ENCODE measurements at regions of chrX and their contacts with region 1.

Region 1: DNA sequence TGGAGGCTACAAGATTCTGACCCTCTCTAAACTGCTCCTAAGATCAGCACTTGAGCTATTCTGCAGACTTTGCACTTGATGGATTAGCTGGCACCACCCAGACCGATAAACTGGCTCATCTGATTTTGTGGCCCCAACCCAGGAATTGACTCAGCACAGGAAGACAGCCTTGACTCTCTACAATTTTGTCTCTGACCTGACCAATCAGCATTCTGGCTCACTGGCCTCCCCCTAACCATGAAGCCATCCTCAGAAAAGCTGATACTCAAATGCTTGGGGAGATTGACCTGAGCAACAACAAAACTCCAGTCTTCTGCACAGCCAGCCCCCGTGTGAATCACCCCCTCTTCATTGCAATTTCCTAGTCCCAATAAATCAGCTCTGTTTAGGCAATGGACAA is 195.4 kb upstream of the PPP1R2C start:
- DNase-seq: no peak
- ATAC-seq: no peak
- H3K4me3 ChIP-seq: no peak overlapping the region
- H3K27ac ChIP-seq: no peak overlapping the region
- H3K4me1 ChIP-seq: peaks cover 8% of the 10 kb centered on the region; the same call in 1 of the 2 replicates
- H3K27me3 ChIP-seq: no peaks in the 10 kb centered on the region
- CTCF ChIP-seq: no peak
- EP300 ChIP-seq: no peak
- POLR2A ChIP-seq: no peak
- RAD21 ChIP-seq: no peak

Region 2: GRCh38 chrX:42577936-42578485 is 395.3 kb before region 1 on chrX:
- CTCF ChIA-PET with region 1: no interaction called
- POLR2A ChIA-PET with region 1: no interaction called
- RAD21 ChIA-PET with region 1: no interaction called
- SMC1A ChIA-PET with region 1: no interaction called
- in situ Hi-C with region 1: no loop called
- intact Hi-C with region 1: no loop called
- DNase-seq: no peak
- ATAC-seq: no peak
- H3K4me3 ChIP-seq: no peak overlapping the region
- H3K27ac ChIP-seq: no peak overlapping the region
- H3K4me1 ChIP-seq: no peaks in the 10 kb centered on the region
- H3K27me3 ChIP-seq: no peaks in the 10 kb centered on the region
- CTCF ChIP-seq: no peak
- EP300 ChIP-seq: no peak
- POLR2A ChIP-seq: no peak
- RAD21 ChIP-seq: no peak

Region 3: GRCh38 chrX:42920752-42921151 is 52.6 kb before region 1 on chrX:
- CTCF ChIA-PET with region 1: no interaction called
- POLR2A ChIA-PET with region 1: no interaction called
- RAD21 ChIA-PET with region 1: no interaction called
- SMC1A ChIA-PET with region 1: no interaction called
- in situ Hi-C with region 1: no loop called
- intact Hi-C with region 1: loop called (anchors 5 kb)
- DNase-seq: no peak
- ATAC-seq: no peak
- H3K4me3 ChIP-seq: no peak overlapping the region
- H3K27ac ChIP-seq: no peak overlapping the region
- H3K4me1 ChIP-seq: no peaks in the 10 kb centered on the region
- H3K27me3 ChIP-seq: no peaks in the 10 kb centered on the region
- CTCF ChIP-seq: no peak
- EP300 ChIP-seq: no peak
- POLR2A ChIP-seq: no peak
- RAD21 ChIP-seq: no peak

Region 4: GRCh38 chrX:42934020-42934726 is 39.1 kb before region 1 on chrX:
- CTCF ChIA-PET with region 1: no interaction called
- POLR2A ChIA-PET with region 1: no interaction called
- RAD21 ChIA-PET with region 1: no interaction called
- SMC1A ChIA-PET with region 1: no interaction called
- in situ Hi-C with region 1: no loop called
- intact Hi-C with region 1: no loop called
- DNase-seq: peak; percentile 75
- ATAC-seq: peak; percentile 98
- H3K4me3 ChIP-seq: no peak overlapping the region; the same call in 1 of the 2 replicates
- H3K27ac ChIP-seq: peak overlapping the region; percentile 83
- H3K4me1 ChIP-seq: peaks cover 15% of the 10 kb centered on the region
- H3K27me3 ChIP-seq: no peaks in the 10 kb centered on the region
- CTCF ChIP-seq: no peak
- EP300 ChIP-seq: peak in 1 of 2 experiments; percentile 69; a peak in 1 of 4 replicates
- POLR2A ChIP-seq: no peak
- RAD21 ChIP-seq: no peak

Region 5: DNA sequence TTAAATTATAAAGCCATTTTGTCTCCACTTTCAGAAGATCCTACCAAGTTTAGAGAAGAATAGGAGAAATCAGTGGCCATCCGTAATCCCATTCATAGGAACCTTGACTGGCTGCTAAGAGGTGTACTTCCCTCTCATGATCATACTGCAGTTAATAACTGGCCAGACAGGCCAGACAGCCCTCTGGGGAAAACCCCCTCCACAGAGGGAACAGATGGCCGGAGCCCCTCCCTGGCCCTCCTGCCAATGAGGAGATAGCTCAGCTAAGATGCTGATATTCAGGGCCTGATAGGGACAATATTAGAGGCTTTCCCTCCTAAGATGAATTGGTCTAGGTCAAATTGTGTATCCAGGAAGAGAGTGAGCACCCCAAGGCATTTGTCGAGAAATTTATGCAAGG is 482.7 kb after region 1 on chrX:
- CTCF ChIA-PET with region 1: no interaction called
- POLR2A ChIA-PET with region 1: no interaction called
- RAD21 ChIA-PET with region 1: no interaction called
- SMC1A ChIA-PET with region 1: no interaction called
- in situ Hi-C with region 1: no loop called
- intact Hi-C with region 1: no loop called
- DNase-seq: no peak
- ATAC-seq: no peak
- H3K4me3 ChIP-seq: no peak overlapping the region
- H3K27ac ChIP-seq: no peak overlapping the region
- H3K4me1 ChIP-seq: no peaks in the 10 kb centered on the region
- H3K27me3 ChIP-seq: no peaks in the 10 kb centered on the region
- CTCF ChIP-seq: no peak
- EP300 ChIP-seq: no peak
- POLR2A ChIP-seq: no peak
- RAD21 ChIP-seq: no peak

Measured in GM12878 (cell line).